Activated T-helper 2 cell treated with anti-CD3 and anti-CD28 coated beads, Interferon-gamma antibody, Interleukin-2, Interleukin-4, amounts not matched to agents 10 μg/mL and 5 μg/mL and 100 μg/mL, durations not matched to agents 14 hours and 24 hours and 36 hours (primary cell): ENCODE measurements at regions of chr6 and their contacts with region 1.

Region 1: DNA sequence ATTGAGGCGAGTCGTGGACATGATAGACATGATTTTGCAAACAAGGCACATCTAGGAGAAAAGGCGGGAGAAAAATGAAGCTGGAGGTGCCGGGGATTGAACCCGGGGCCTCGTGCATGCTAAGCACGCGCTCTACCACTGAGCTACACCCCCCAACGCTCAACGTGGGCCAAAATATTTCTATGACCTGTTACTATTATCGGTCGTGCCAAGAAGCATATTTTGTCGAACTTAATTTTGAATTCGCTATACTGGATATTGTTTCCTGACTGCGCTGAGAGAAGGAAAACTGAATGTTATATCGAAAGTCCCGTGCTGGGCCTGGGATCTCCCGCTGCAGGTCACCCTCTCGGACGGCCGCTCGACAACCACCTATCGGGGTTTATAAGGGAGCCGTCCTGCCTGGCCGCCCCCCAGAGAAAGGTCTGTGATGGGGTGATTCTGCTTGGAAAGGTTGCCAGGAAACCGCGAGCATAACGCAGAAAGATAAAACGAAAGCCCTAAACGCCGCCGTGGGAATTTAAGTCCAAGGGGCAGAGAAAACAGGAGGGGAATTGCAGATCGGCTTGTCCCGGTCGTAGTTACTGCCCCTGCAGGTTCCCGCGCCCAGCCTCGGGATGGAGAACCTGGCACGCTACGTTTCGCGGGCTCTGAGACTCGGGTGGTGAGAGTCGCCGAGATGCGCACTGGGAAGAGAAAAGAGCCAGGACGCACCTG is 60.0 kb downstream of the TRIM27 start:
- DNase-seq: peak; percentile 78
- H3K4me3 Mint-ChIP-seq: peak overlapping the region; percentile 93
- H3K27ac Mint-ChIP-seq: peak overlapping the region; percentile 78
- H3K4me1 Mint-ChIP-seq: peaks cover 38% of the 10 kb centered on the region
- H3K27me3 Mint-ChIP-seq: peaks cover 18% of the 10 kb centered on the region

Region 2: GRCh38 chr6:27132532-27133280 is 1731.1 kb before region 1 on chr6:
- intact Hi-C with region 1: loop called (anchors 10 kb)
- DNase-seq: peak; percentile 95
- H3K4me3 Mint-ChIP-seq: no peak overlapping the region
- H3K27ac Mint-ChIP-seq: no peak overlapping the region
- H3K4me1 Mint-ChIP-seq: peaks cover 38% of the 10 kb centered on the region
- H3K27me3 Mint-ChIP-seq: no peaks in the 10 kb centered on the region

Region 3: GRCh38 chr6:28824793-28825731 is 38.7 kb before region 1 on chr6:
- intact Hi-C with region 1: no loop called
- DNase-seq: no peak
- H3K4me3 Mint-ChIP-seq: no peak overlapping the region
- H3K27ac Mint-ChIP-seq: no peak overlapping the region
- H3K4me1 Mint-ChIP-seq: peaks cover 3% of the 10 kb centered on the region
- H3K27me3 Mint-ChIP-seq: peaks cover 65% of the 10 kb centered on the region

Region 4: DNA sequence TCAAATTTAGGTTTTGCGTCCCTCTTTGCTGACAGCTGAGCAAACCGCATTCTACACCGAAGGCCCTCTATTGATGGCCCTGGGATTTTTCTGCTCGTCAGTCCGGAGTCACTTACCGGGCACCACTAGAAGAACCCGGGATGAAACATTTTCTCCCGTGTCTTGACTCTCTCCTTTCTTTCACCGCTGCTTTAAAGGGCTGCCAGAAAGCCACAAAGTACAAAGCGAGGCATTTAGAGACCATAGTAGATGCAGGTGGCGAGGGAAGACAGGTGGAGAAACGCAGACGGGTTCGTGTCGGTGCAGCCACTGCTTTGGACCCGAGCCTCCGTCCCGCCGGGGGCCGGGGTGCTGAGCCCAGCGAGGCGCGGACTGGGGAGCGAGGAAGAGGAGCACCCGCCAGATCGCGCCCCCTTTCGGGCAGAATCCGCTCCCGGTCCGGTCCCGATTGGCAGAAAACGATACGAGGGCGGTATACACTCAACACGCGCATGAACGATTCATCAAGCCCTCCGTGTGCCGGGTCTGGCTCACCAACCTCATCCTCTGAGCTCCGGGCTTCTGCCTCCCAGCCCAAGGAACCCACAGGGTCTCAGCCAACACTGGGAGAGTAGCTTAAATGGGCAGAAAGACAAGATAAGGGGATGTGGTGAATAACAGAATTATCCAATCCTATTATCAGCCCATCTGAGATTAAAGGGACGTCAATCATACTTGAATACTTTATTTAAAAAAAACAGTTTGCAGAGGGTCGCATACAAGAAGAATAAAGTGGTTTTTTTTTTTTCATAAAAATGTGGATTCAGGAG is 24.9 kb before region 1 on chr6:
- intact Hi-C with region 1: loop called (anchors 1 kb)
- DNase-seq: peak; percentile 75
- H3K4me3 Mint-ChIP-seq: peak overlapping the region; percentile 97
- H3K27ac Mint-ChIP-seq: peak overlapping the region; percentile 79
- H3K4me1 Mint-ChIP-seq: peaks cover 17% of the 10 kb centered on the region
- H3K27me3 Mint-ChIP-seq: peaks cover 43% of the 10 kb centered on the region

Region 5: GRCh38 chr6:28880894-28881780 is 17.4 kb after region 1 on chr6:
- intact Hi-C with region 1: loop called (anchors 1 kb)
- DNase-seq: peak; percentile 32
- H3K4me3 Mint-ChIP-seq: peak overlapping the region; percentile 72
- H3K27ac Mint-ChIP-seq: no peak overlapping the region
- H3K4me1 Mint-ChIP-seq: peaks cover 23% of the 10 kb centered on the region
- H3K27me3 Mint-ChIP-seq: peaks cover 22% of the 10 kb centered on the region